Activated T-helper 1 cell treated with anti-CD3 and anti-CD28 coated beads, Interleukin-12 subunit alpha, Interleukin-12 subunit beta, Interleukin-2, Interleukin-4 antibody, amounts not matched to agents 30 ng/mL and 10 ng/mL and 1 ng/mL, durations not matched to agents 14 hours and 24 hours and 36 hours (primary cell): ENCODE measurements at regions of chr16 and their contacts with region 1.

Region 1: DNA sequence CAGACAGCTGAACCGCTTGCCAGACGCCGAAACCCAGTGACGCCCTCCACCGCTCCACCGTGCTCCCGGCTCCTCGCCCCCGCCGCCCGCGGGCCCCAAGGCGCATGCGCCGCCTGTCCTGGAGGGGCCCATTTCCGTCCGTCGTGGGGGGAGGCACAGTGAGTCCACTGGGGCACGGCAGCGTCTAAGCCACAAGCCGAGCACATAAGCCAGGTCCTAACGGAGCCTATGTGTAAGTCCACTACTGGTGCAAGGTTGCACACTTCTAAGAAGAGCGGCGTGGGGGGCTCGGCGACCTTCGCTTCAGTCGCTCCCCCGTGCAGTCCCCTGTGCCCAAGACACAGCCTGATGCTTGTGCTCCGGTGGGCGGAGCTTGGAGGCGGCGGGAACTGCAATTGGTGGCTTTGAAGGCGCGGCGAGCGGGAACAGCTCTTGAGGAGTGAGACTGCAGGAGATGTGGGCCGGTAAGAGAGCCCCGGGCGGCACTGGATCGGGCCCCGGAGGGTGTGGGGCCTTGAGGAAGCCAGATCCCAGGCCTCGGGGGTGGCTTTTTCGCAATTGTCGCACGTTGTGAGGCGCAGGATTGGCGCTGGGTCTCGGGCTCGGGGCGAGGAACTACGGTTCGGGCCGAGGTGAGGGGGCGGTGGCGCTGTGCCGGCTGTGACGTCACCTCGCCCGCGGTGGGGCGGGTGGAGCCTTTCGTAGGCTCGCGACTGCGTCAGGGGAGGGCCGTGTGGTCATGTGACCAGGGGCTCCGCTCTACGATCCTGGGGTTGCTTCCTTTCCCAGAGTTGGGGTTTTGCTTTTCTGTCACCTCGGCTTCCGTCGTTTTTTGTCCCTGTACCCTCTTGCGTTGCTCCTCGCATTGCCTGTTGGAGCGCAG is at the starts of genes CENPN and CMC2:
- DNase-seq: peak; percentile 97
- H3K4me3 Mint-ChIP-seq: peak within 1 kb of the TSS; percentile 100
- H3K27ac Mint-ChIP-seq: peak within 1 kb of the TSS; percentile 100
- H3K4me1 Mint-ChIP-seq: peaks cover 61% of the 10 kb centered on the region
- H3K27me3 Mint-ChIP-seq: peaks cover 2% of the 10 kb centered on the region
- total RNA-seq, gene CENPN: 65.6 and 67.8 TPM in 2 replicates
- total RNA-seq, gene CMC2: 141 and 156 TPM in 2 replicates

Region 2: GRCh38 chr16:80540516-80541272 is 466.4 kb before region 1 on chr16 and contains the start of gene DYNLRB2:
- intact Hi-C with region 1: loop called (anchors 5 kb)
- DNase-seq: peak; percentile 92
- H3K4me3 Mint-ChIP-seq: peak within 1 kb of the TSS; percentile 87
- H3K27ac Mint-ChIP-seq: peak within 1 kb of the TSS; percentile 96
- H3K4me1 Mint-ChIP-seq: peaks cover 38% of the 10 kb centered on the region
- H3K27me3 Mint-ChIP-seq: peaks cover 2% of the 10 kb centered on the region
- total RNA-seq, gene DYNLRB2: not detected in 2 replicates

Region 3: DNA sequence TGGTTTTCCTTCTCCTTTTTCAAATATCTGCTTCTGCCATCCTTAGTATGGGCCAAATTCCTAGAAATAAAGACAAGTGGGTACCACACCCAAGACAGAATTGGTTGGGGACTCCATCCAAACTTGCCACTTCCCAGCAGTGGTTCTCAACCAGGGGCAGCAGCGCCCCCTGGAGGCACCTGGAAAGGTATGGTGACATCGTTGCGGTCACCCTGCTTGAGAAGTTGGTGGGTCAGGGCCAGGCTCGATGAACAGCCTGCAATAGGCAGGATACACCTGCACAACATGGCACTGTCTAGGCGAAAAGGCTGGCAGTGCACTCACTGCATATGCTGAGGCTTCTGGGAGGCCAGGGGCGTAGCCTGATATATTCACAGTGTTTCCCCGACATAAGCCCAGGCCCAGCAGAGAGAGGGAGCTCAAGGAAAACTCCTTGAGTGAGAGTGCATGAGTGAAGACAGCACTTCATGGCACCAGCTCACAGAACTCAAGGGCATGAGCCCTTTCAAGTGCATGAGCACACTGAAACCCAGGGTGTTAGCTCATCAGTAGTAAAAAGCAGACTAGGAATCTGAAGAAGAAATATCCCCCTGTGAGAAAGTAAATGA is 58.1 kb before region 1 on chr16:
- intact Hi-C with region 1: loop called (anchors 1 kb)
- DNase-seq: peak; percentile 17
- H3K4me3 Mint-ChIP-seq: no peak overlapping the region
- H3K27ac Mint-ChIP-seq: no peak overlapping the region
- H3K4me1 Mint-ChIP-seq: peaks cover 18% of the 10 kb centered on the region
- H3K27me3 Mint-ChIP-seq: peaks cover 6% of the 10 kb centered on the region

Region 4: DNA sequence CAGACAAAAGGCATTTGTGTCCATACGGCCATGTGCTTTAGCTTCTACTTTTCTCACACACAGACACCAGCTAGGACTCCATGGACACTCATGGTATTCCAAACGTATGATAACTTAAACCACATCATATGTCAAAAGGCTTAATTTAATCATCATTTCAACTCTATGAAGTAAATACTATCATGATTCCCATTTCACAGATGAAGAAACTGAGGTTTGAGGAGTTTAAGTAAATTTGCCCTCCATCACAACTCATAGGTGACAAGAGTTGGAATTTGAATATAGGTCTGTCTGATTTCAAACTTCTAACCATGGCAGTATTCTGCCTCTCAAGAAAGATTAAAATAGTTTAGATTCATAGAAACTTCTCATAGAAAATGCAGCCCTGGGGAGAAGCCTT is 44.2 kb before region 1 on chr16:
- intact Hi-C with region 1: no loop called
- DNase-seq: no peak
- H3K4me3 Mint-ChIP-seq: no peak overlapping the region
- H3K27ac Mint-ChIP-seq: no peak overlapping the region
- H3K4me1 Mint-ChIP-seq: no peaks in the 10 kb centered on the region
- H3K27me3 Mint-ChIP-seq: peaks cover 1% of the 10 kb centered on the region

Region 5: GRCh38 chr16:80993307-80993706 is 13.7 kb before region 1 on chr16:
- intact Hi-C with region 1: no loop called
- DNase-seq: no peak
- H3K4me3 Mint-ChIP-seq: no peak overlapping the region
- H3K27ac Mint-ChIP-seq: no peak overlapping the region
- H3K4me1 Mint-ChIP-seq: peaks cover 56% of the 10 kb centered on the region
- H3K27me3 Mint-ChIP-seq: no peaks in the 10 kb centered on the region

Region 6: GRCh38 chr16:81095953-81096717 is 89.1 kb after region 1 on chr16 and contains the start of gene GCSH:
- intact Hi-C with region 1: loop called (anchors 1 kb)
- DNase-seq: peak; percentile 99
- H3K4me3 Mint-ChIP-seq: peak within 1 kb of the TSS; percentile 81
- H3K27ac Mint-ChIP-seq: peak within 1 kb of the TSS; percentile 46
- H3K4me1 Mint-ChIP-seq: peaks cover 6% of the 10 kb centered on the region
- H3K27me3 Mint-ChIP-seq: peaks cover 3% of the 10 kb centered on the region
- total RNA-seq, gene GCSH: 16.5 and 19.1 TPM in 2 replicates

Region 7: DNA sequence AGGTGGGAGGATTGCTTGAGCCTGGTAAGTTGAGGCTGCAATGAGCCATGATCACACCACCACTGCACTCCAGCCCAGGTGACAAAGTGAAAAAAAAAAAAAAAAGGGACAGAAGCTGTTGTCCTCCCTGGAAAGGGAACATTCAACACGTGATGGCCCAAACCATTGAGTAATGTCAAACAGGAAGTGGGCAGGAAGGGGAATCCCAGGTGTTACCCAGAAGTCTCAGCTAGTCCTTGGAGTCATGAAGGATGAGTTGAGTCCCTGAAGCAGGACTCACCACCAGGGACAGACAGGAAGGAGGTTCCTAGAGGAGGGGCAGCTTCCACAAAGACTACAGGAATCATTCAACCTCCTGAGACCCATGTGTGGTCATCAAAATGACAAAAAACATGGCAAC is 417.7 kb after region 1 on chr16:
- intact Hi-C with region 1: no loop called
- DNase-seq: no peak
- H3K4me3 Mint-ChIP-seq: no peak overlapping the region
- H3K27ac Mint-ChIP-seq: peak overlapping the region; percentile 34
- H3K4me1 Mint-ChIP-seq: peaks cover 16% of the 10 kb centered on the region
- H3K27me3 Mint-ChIP-seq: peaks cover 10% of the 10 kb centered on the region

Region 8: DNA sequence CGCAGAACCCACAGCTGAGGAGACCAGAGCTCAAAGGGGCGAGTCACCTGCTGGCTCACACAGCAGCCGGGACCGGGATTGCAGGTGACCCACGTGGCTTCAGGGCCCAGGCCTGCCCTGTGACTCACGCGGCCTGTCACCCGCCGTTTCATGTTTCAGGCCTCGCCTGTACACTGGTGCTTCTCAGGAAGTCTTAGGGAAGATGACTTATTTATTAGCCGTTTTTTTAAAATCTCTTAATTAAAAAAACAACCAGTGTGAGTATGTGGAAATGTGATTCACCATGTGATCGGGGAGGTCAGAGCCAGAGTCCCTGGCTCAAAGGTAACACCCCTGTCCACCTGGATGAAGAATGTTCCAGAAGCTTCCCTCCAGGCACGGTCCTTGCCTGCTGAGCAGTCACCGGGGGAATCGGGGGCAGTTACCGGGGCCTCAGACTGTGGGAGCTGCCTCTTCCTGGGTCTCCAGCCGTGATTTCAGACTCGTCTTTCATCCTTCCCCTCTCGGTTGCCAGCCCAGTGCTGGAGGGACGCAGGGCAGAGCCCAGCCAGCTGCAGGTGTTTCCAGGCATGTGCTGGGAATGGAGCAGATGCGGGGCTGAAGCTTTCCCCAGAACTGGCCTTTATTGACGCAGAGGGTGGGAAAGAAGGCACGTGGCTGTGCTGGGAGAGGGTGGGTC is 486.8 kb after region 1 on chr16:
- intact Hi-C with region 1: no loop called
- DNase-seq: no peak
- H3K4me3 Mint-ChIP-seq: no peak overlapping the region
- H3K27ac Mint-ChIP-seq: peak overlapping the region; percentile 1
- H3K4me1 Mint-ChIP-seq: peaks cover 14% of the 10 kb centered on the region
- H3K27me3 Mint-ChIP-seq: no peaks in the 10 kb centered on the region